Heart right ventricle (tissue), 16 donors: ENCODE measurements at regions of chr11 and their contacts with region 1.

Region 1: DNA sequence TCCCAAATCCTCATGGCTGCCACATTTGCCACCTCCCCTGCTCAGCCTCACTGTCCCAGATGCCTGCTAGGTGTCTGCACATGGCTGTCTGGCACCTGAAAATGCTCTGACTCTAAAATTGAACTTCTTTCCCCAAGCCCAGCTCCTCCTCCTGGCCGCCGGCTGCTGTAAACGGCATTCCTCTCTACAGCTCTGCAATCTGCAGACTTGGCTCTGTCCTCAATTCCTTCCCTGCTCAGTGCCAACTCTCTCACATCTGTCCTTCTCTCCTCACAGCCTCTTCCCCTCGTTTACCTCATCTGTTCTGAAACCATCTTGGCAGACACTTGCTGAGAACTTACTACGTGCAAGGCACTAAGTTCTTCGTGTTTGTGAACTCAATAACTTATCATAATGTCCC is 169.4 kb upstream of the SYT13 start:
- DNase-seq: no peak
- ATAC-seq: no peak
- H3K4me3 ChIP-seq: no peak overlapping the region
- H3K27ac ChIP-seq: no peak overlapping the region
- H3K4me1 ChIP-seq: peaks cover 0 to 5% (median 0%) of the 10 kb centered on the region in 9 donors
- H3K27me3 ChIP-seq: peaks cover 0 to 19% (median 0%) of the 10 kb centered on the region in 7 donors
- CTCF ChIP-seq: no peak

Region 2: DNA sequence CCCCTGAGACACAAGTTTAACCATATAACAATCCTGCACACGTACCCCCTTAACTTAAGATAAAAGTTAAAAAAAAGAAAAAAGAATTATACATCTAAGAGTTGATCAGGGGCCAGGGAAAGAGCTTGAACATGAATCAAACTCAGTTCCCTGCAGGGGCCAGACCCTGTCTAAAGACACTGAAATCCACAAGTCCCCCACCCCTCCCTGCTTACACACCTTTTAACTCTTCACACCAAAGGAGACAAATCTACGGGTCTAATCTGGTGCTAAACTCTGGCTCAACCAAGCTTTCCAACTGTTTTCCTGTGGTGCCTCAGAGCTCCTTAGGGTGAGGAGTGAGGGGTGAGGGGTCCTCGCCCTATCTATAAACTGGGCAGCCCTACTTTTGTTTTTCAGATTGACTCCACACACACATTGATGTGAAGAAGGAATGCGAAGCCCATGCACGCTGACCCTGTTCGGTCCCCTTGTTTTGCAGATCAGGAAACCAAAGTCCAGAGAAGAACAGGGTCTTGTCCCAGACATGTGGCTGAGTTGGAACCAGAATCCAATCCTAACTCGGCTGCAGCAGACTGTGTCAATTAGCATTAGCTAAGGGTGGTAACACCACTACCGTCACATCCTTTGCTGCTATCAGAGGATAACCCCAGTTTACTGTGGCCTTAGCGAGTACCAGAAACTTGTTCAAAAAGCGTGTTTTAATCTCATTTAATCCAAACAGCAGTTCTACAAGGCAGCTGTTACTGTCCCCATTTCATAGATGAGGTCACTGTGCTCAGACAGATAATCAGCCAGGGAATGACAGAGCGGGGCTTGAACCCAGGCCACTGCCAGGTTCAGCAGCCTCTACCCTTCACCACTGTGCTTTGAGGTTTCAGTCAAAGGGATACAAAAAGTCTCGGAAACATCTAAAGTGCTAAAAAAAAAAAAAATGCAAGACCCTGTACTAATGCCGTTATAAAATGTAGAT is 24.2 kb before region 1 on chr11:
- intact Hi-C with region 1: loop called in 1 of 10 experiments (anchors 2 kb)
- DNase-seq: no peak
- ATAC-seq: no peak
- H3K4me3 ChIP-seq: no peak overlapping the region
- H3K27ac ChIP-seq: no peak overlapping the region
- H3K4me1 ChIP-seq: no peaks in the 10 kb centered on the region
- H3K27me3 ChIP-seq: peaks cover 6 to 59% (median 22%) of the 10 kb centered on the region in 7 donors
- CTCF ChIP-seq: no peak